IMR-90 (cell line): ENCODE measurements at regions of chr6 and their contacts with region 1.

Region 1: DNA sequence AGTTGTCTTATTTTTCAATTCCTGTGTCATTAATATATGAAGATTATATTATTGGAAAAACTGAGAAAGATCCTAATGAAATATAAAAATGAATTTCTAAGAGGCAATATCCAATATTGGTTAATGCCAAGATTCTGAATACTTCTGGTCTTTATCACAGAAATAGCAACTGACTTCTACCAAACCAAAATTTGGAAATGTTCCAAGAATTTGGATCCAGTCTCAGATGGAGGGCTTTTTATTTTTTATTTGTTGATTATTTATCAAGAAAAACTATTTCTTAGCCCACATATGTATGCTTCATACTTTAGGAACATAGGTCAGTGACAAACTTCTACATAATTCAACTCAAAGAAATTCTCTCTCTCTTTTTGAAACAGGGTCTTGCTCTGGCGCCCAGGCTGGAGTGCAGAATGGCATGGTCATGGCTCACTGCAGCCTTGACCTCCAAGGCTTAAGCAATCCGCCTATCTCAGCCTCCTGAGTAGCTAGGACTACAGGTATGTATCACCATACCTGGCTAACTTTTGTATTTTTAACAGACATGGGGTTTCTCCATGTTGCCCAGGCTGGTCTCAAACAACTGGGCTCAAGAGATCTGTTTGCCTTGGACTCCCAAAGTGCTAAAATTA is 13.1 kb downstream of the NUP43 start:
- DNase-seq: no peak
- ATAC-seq: no peak
- H3K4me3 ChIP-seq: no peak overlapping the region
- H3K27ac ChIP-seq: no peak overlapping the region
- H3K4me1 ChIP-seq: no peaks in the 10 kb centered on the region
- H3K27me3 ChIP-seq: no peaks in the 10 kb centered on the region
- CTCF ChIP-seq: no peak
- POLR2A ChIP-seq: no peak
- RAD21 ChIP-seq: no peak

Region 2: DNA sequence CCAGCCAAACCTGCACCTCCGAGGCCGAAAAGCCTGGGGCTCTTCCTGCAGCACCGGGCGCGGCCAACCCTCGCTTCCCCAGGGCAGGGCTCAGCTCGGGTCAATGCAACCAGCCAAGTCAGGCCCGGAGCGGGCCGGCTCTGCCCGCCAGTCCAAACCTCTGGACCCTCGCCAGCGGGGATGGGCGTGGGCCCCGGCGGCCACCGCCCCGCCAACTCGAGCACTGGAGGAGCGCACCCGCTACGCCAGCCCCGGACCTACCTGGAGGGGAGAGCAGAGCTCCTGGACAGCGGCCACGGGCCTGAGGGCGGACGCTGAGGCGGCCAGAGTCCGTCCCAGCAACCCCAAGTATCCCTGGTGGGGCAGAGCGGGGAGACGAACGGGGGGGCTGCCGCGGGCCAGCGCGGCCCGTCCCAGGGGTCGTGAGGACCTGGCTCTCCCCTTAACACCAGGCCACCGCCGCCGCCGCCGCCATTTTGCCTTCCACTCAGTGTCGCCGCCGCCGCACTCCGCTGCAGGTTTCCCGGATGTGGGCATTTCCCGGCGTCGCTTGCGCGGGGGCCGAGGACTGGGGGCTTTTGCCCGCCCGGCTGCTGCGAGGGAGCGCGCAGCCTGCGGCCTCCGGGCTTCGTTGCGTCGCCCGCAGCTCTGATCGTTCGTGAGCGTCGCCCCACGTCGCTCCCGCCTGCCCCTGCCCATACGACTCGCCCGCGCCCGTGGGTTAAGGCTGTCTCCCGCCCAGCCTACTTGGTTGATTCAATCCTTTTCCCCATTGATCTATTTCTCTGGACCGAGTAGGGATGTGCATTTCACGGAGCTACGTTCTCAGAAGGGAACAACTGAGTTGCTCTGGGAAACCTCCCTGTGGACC is 15.4 kb before region 1 on chr6 and contains the start of gene LATS1:
- CTCF ChIA-PET with region 1: no interaction called
- POLR2A ChIA-PET with region 1: interaction called, 10 read pairs
- dilution Hi-C with region 1: no loop called
- in situ Hi-C with region 1: no loop called
- intact Hi-C with region 1: no loop called
- DNase-seq: peak; percentile 76
- ATAC-seq: peak; percentile 90
- H3K4me3 ChIP-seq: peak within 1 kb of the TSS; percentile 86
- H3K27ac ChIP-seq: peak within 1 kb of the TSS; percentile 99
- H3K4me1 ChIP-seq: peaks cover 2% of the 10 kb centered on the region; the same call in 1 of the 2 replicates
- H3K27me3 ChIP-seq: no peaks in the 10 kb centered on the region
- CTCF ChIP-seq: no peak
- POLR2A ChIP-seq: peak; percentile 88
- RAD21 ChIP-seq: no peak
- total RNA-seq, gene LATS1: 18.3 and 20.1 TPM in 2 replicates